ENCODE measurements at regions of chr14 and their contacts with region 1.

Region 1: DNA sequence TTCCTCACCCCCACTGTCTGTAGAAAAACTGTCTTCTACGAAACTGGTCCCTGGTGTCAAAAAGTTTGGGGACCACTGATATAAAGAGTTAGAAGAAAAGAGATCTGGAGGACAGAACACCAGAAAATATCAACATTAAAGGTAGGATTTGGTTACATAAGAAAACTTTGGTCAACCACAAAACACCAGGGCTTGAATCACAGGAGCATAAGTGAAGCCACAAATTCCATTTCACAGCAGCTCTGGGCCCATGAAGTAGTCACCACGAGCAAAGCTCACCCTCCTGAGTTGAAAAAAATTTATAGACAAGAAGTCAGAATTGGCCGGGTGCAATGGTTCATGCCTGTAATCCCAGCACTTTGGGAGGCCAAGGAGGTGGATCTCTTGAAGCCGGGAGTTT is 19.4 kb downstream of the RALGAPA1 start:
- DNase-seq: peak; percentile 68
- ATAC-seq: no peak
- H3K4me3 ChIP-seq: no peak overlapping the region
- H3K27ac ChIP-seq: no peak overlapping the region
- H3K4me1 ChIP-seq: no peaks in the 10 kb centered on the region
- H3K27me3 ChIP-seq: no peaks in the 10 kb centered on the region
- CTCF ChIP-seq: no peak
- POLR2A ChIP-seq: no peak
- RAD21 ChIP-seq: no peak

Region 2: DNA sequence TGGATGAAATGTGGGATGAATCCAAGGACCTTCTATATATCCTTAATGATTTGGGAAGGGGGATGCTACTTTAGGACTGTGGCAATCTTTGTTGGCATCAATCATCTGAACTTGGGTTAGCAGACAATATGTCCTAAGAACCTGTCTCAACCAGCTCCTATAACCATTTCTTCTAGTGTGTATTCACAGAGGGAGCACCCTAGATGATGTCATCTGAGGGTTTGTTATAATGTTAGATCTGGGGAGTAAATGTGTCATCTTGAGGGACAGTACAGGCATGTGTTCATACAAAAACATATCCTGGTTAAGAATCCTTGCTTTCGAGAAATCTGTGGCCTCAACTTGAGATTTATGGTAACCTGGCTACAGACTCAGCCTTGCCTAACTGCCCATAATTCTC is 343.2 kb before region 1 on chr14:
- CTCF ChIA-PET with region 1: no interaction called
- POLR2A ChIA-PET with region 1: no interaction called
- dilution Hi-C with region 1: no loop called
- in situ Hi-C with region 1: loop called (anchors 10 kb)
- intact Hi-C with region 1: no loop called
- DNase-seq: no peak
- ATAC-seq: no peak
- H3K4me3 ChIP-seq: no peak overlapping the region
- H3K27ac ChIP-seq: no peak overlapping the region
- H3K4me1 ChIP-seq: no peaks in the 10 kb centered on the region
- H3K27me3 ChIP-seq: 0 out of 2 replicates have a peak, but pooled peaks cover 1% of the 10 kb centered on the region
- CTCF ChIP-seq: no peak
- POLR2A ChIP-seq: no peak
- RAD21 ChIP-seq: no peak

Region 3: GRCh38 chr14:35776823-35777222 is 12.8 kb before region 1 on chr14:
- CTCF ChIA-PET with region 1: no interaction called
- POLR2A ChIA-PET with region 1: no interaction called
- dilution Hi-C with region 1: no loop called
- in situ Hi-C with region 1: no loop called
- intact Hi-C with region 1: no loop called
- DNase-seq: no peak
- ATAC-seq: no peak
- H3K4me3 ChIP-seq: no peak overlapping the region
- H3K27ac ChIP-seq: no peak overlapping the region
- H3K4me1 ChIP-seq: no peaks in the 10 kb centered on the region
- H3K27me3 ChIP-seq: no peaks in the 10 kb centered on the region
- CTCF ChIP-seq: no peak
- POLR2A ChIP-seq: no peak
- RAD21 ChIP-seq: no peak